ENCODE measurements at regions of chr3 and their contacts with region 1.

Region 1: GRCh38 chr3:194573691-194574437 is 59.4 kb downstream of the TMEM44 start:
- DNase-seq: no peak
- H3K4me3 Mint-ChIP-seq: no peak overlapping the region
- H3K27ac Mint-ChIP-seq: no peak overlapping the region
- H3K4me1 Mint-ChIP-seq: peaks cover 18% of the 10 kb centered on the region
- H3K27me3 Mint-ChIP-seq: peaks cover 20% of the 10 kb centered on the region

Region 2: DNA sequence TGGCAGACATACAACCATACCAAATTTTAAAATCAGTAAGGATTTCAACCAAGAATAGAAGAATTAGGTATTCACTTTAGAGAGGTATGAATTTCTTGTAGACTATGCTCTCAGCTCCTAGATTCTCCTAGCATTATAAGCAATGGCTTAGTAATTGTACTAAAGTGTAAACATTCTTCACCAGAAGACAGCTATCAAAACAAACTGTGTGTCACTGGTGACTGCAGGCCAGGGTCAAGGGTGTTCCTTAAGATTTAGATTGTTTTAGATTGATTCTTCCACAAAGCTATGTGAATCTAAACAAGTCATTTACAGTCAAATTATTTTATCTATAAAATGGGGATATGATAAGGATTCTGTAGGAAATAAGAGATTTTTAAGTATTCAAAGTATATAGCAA is 151.7 kb before region 1 on chr3:
- intact Hi-C with region 1: no loop called
- DNase-seq: no peak
- H3K4me3 Mint-ChIP-seq: no peak overlapping the region
- H3K27ac Mint-ChIP-seq: no peak overlapping the region
- H3K4me1 Mint-ChIP-seq: no peaks in the 10 kb centered on the region
- H3K27me3 Mint-ChIP-seq: no peaks in the 10 kb centered on the region

Region 3: DNA sequence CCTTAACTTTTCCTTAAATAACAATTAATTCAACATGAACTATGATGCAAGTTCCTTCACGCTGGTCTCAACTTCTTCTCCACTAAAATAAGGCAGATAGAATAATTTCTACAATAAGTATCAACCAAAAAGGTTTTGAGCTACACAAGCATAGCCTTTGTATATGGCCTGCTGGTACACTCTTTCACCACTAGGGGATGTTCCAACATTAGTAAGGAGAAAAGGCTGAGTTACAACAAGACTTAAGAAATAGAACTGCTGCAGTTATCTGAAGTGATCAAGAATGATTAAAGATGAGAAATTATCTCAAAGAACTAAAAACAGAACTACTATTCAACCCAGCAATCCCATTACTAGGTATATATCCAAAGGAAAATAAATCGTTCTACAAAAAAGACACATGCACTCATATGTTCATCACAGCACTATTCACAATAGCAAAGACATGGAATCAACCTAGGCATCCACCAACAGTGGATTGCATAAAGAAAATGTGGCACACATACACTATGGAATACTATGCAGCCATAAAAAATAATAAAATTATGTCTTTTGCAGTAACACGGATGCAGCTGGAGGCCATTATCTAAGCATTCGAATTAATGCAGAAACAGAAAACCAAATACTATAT is 101.5 kb before region 1 on chr3:
- intact Hi-C with region 1: loop called (anchors 1 kb)
- DNase-seq: peak; percentile 16
- H3K4me3 Mint-ChIP-seq: no peak overlapping the region
- H3K27ac Mint-ChIP-seq: no peak overlapping the region
- H3K4me1 Mint-ChIP-seq: peaks cover 12% of the 10 kb centered on the region
- H3K27me3 Mint-ChIP-seq: no peaks in the 10 kb centered on the region

Region 4: GRCh38 chr3:194481103-194481502 is 92.8 kb before region 1 on chr3:
- intact Hi-C with region 1: loop called (anchors 2 kb)
- DNase-seq: no peak
- H3K4me3 Mint-ChIP-seq: peak overlapping the region; percentile 51
- H3K27ac Mint-ChIP-seq: peak overlapping the region; percentile 91
- H3K4me1 Mint-ChIP-seq: peaks cover 46% of the 10 kb centered on the region
- H3K27me3 Mint-ChIP-seq: no peaks in the 10 kb centered on the region